Activated CD8-positive, alpha-beta T cell treated with anti-CD3 and anti-CD28 coated beads for 36 hours (primary cell): ENCODE measurements at regions of chr20 and their contacts with region 1.

Region 1: DNA sequence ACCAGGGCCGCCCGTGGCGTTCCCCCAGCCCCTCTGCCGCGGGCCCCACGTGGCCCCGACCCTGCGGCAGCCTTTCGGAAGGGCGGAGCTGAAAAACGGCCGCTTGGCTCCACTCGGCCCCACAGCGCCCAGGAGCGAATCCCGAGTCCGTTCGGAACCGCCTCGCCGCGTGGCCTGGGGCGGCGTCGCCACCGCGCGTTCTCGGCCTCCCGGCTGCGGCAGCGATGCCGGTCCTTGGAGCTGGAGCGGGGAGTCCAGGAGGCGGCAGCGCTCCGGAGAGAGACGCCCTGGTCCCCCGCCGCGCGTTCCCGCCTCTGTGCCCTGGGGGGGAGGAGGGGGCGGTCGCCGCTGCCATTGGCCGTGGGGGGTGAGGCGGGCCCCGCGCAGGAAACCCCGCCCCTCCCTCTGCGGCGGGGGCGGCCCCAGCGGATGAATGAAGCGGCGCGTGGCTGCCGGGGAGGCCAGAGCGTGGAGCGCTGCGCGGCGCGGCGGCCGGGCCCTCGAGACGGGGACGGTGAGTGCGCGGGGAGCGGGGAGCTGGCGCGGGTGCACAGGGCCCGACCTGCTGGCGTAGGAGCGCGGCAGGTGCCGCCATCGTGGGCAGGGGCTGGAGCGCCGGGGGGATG is at the start of gene SLCO4A1:
- DNase-seq: peak; percentile 90
- ATAC-seq: peak; percentile 93
- H3K4me3 Mint-ChIP-seq: peak within 1 kb of the TSS; percentile 79
- H3K27ac Mint-ChIP-seq: peak within 1 kb of the TSS; percentile 81
- H3K4me1 Mint-ChIP-seq: peaks cover 26% of the 10 kb centered on the region
- H3K27me3 Mint-ChIP-seq: peaks cover 12% of the 10 kb centered on the region
- CTCF ChIP-seq: no peak
- total RNA-seq, gene SLCO4A1: 66.5 to 68.4 TPM

Region 2: DNA sequence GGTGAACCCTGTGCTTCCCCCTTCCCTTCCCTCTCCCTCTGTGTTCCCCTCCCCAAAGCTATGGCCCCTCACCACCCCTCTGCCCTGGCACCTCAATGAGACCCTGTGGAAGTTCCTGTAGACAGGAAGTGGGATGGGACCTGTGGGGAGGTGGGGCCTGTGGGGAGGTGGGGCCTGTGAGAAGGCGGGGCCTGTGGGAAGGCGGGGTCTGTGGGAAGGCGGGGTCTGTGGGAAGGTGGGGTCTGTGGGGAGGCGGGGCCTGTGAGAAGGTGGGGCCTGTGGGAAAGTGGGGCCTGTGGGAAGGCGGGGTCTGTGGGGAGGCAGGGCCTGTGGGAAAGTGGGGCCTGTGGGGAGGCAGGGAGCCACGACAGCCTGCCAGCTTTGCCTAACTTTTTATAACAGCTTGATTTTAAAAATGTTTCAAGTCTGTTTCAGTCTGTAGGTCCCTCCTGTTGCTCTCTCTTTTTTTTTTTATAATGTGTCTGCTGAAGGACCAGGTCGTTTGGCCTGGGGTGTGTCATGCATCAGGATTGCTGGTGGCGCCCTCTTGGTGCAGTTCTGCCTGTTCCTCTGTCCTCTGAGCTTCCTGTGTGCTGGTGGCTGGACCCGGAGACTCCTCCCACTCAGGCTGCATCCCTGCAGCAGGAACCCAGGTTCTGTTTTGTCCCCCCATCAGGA is 70.3 kb before region 1 on chr20:
- CTCF ChIA-PET with region 1: no interaction called
- POLR2A ChIA-PET with region 1: no interaction called
- intact Hi-C with region 1: no loop called
- DNase-seq: peak; percentile 59
- ATAC-seq: peak; percentile 87
- H3K4me3 Mint-ChIP-seq: no peak overlapping the region
- H3K27ac Mint-ChIP-seq: no peak overlapping the region
- H3K4me1 Mint-ChIP-seq: peaks cover 5% of the 10 kb centered on the region
- H3K27me3 Mint-ChIP-seq: peaks cover 12% of the 10 kb centered on the region
- CTCF ChIP-seq: peak; percentile 22

Region 3: DNA sequence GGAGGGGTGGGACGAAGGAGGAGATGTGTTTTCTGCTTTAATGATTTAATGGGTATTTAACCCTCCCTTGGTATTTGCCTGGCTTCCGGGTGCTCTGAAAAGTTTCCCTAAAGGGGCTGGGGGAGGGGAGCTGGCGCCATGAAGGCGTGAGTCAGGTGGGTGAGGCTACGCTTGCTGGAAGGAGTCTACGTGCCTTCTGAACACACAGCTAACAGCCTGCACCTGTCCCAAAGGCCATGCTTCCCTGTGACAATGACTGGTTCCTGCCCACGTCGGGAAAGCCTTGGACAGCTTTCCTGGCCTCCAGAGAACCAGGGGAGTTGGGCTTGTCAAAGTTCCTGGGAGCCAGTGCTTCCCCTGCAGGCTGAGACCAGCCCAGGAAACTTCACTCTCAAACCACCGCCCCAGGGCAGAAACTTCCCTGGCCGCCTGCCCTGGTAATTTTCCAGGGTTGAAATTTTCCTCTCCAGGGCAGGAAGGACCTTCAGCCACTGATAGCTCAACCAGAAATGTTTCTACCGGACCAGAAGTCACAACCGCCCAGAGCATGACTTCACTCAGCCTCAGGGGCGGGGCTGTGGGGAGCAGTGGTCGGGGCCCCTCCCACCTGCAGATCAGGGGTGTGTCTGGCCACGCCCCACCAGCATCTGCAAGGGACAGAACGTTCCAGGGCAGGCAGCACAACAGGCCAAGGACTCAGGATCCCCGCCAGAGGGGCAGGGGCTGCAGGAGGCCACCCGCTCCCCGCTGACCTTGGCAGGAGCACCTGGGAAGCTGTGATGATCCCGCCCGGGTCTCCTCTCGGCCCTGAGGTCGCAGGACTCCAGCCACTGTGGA is 18.4 kb before region 1 on chr20:
- CTCF ChIA-PET with region 1: interaction called, 9 read pairs
- POLR2A ChIA-PET with region 1: interaction called, 22 read pairs
- intact Hi-C with region 1: loop called (anchors 2 kb)
- DNase-seq: peak; percentile 98
- ATAC-seq: peak; percentile 93
- H3K4me3 Mint-ChIP-seq: peak overlapping the region; percentile 68
- H3K27ac Mint-ChIP-seq: peak overlapping the region; percentile 95
- H3K4me1 Mint-ChIP-seq: peaks cover 34% of the 10 kb centered on the region
- H3K27me3 Mint-ChIP-seq: no peaks in the 10 kb centered on the region
- CTCF ChIP-seq: peak; percentile 10

Region 4: GRCh38 chr20:62652051-62652926 is 10.1 kb after region 1 on chr20:
- CTCF ChIA-PET with region 1: interaction called, 9 read pairs
- POLR2A ChIA-PET with region 1: interaction called, 23 read pairs
- intact Hi-C with region 1: no loop called
- DNase-seq: peak; percentile 87
- ATAC-seq: peak; percentile 73
- H3K4me3 Mint-ChIP-seq: peak overlapping the region; percentile 62
- H3K27ac Mint-ChIP-seq: peak overlapping the region; percentile 94
- H3K4me1 Mint-ChIP-seq: peaks cover 39% of the 10 kb centered on the region
- H3K27me3 Mint-ChIP-seq: no peaks in the 10 kb centered on the region
- CTCF ChIP-seq: no peak